H1 (cell line): ENCODE measurements at regions of chr11 and their contacts with region 1.

Region 1: GRCh38 chr11:61187505-61188130 is 15.7 kb upstream of the PGA3 start:
- DNase-seq: peak; percentile 58 to 90
- H3K4me3 ChIP-seq: no peak overlapping the region
- H3K27ac ChIP-seq: no peak overlapping the region
- H3K4me1 ChIP-seq: no peaks in the 10 kb centered on the region
- H3K27me3 ChIP-seq: no peaks in the 10 kb centered on the region
- CTCF ChIP-seq: peak; percentile 80 to 93 (median 89)
- EP300 ChIP-seq: no peak
- POLR2A ChIP-seq: no peak
- RAD21 ChIP-seq: peak; percentile 96 to 97

Region 2: DNA sequence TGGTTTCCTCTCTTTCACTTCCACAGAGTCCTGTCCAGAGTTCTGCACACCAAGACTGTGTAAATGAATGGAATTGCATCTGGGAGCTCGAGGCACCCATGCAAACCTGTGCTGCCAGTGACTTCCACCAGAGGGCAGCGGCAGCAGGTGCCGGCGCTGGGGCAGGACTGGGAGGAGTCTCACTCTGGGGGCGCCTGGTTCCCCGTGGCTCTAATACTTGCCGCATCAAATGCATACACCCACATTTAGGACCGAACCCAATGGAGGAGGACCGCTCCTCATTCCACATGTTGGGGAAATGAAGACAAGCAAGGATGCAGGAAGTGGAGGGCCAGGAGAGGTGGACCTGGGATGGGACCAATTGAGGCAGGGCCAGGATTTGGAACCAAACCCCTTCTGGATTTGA is 217.2 kb before region 1 on chr11:
- CTCF ChIA-PET with region 1: interaction called, 19 read pairs
- POLR2A ChIA-PET with region 1: interaction called, 4 read pairs
- DNase-seq: peak in 1 of 2 experiments; percentile 86
- H3K4me3 ChIP-seq: no peak overlapping the region
- H3K27ac ChIP-seq: no peak overlapping the region
- H3K4me1 ChIP-seq: no peaks in the 10 kb centered on the region
- H3K27me3 ChIP-seq: no peaks in the 10 kb centered on the region; a peak in 2 of 7 replicates
- CTCF ChIP-seq: peak; percentile 88 to 96 (median 89)
- EP300 ChIP-seq: no peak
- POLR2A ChIP-seq: no peak
- RAD21 ChIP-seq: peak; percentile 77 to 84

Region 3: DNA sequence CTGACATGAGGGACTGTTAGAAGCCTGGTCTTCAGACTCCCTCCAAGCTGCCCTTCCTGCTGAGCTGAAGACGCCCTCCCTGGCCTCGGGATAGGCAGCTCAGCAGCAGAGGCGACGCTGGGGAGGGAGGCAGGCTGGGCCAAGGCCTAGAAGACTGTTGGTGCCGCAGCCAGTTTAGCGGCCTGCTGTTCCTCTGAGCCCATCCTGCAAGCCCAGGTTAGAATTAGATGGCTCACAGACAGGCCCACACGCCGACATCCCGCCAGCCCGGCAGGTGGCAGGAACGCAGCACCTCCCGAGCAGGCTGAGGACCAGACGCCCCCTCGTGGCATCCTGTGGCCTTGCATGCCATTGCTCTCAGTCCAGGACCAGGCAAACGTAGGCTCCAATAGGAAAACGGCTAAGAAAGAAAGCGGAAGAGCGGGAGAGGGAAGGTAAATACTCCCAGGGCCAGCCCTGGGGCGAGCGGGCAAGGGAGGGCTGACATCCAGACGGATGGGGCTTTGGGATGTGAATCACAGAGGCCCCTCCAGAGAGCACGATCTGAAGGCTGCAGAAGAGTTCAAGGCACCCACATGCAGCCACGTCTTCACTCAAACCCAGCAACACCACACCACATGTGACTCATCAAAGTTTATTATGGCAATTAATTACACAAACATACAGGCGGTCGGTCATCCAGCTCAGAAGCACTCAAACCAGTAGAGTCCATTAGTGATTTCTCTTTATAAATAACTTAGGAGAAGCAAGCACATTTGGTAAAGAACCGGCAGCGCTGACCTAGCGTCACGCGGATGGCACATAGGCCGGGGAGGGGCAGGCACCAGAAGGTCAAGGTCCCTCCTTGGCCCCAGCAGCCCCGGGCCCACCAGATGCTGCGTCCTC is 57.7 kb before region 1 on chr11:
- CTCF ChIA-PET with region 1: interaction called, 38 read pairs
- POLR2A ChIA-PET with region 1: no interaction called
- DNase-seq: peak; percentile 91 to 98
- H3K4me3 ChIP-seq: no peak overlapping the region
- H3K27ac ChIP-seq: no peak overlapping the region
- H3K4me1 ChIP-seq: peaks cover 0 to 8% (median 5%) of the 10 kb centered on the region in 4 experiments; a peak in 4 of 7 replicates
- H3K27me3 ChIP-seq: no peaks in the 10 kb centered on the region
- CTCF ChIP-seq: peak; percentile 100
- EP300 ChIP-seq: no peak
- POLR2A ChIP-seq: no peak
- RAD21 ChIP-seq: peak; percentile 98

Region 4: DNA sequence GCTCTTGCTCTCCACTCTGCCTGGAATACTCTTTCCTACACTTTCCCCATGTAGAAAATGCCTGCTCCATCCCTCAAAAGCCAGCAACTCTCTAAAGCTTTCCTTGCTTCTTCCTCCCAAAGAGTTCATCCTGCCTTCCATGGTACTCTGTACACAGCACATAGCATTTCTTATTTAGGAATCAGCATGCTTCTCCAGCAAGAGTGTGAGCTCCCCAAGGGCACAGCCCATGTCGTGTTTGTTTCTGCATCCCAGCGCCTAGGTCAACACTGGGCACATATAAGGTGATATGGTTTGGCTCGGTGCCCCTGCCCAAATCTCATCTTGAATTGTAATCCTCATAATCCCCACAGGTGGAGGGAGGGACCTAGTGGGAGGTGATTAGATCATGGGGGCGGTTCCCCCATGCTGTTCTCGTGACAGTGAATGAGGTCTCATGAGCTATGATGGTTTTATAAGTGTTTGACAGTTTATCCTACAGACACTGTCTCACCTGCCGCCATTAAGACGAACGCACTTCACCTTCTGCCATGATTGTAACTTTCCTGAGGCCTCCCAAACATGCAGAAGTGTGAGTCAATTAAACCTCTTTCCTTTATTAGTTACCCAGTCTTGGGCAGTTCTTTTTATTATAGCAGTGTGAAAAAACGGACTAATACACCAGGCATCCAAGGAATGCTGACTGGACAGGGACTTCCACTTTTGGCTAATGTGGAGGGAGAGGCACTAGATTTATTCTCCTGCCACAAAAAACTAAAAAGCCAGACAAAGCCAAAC is 34.6 kb before region 1 on chr11:
- CTCF ChIA-PET with region 1: interaction called, 13 read pairs
- POLR2A ChIA-PET with region 1: no interaction called
- DNase-seq: no peak
- H3K4me3 ChIP-seq: no peak overlapping the region
- H3K27ac ChIP-seq: no peak overlapping the region
- H3K4me1 ChIP-seq: peaks cover 2 to 21% (median 9%) of the 10 kb centered on the region in 4 experiments; a peak in 6 of 7 replicates
- H3K27me3 ChIP-seq: no peaks in the 10 kb centered on the region
- CTCF ChIP-seq: no peak
- EP300 ChIP-seq: no peak
- POLR2A ChIP-seq: no peak
- RAD21 ChIP-seq: no peak

Region 5: GRCh38 chr11:61172356-61172755 is 15.3 kb before region 1 on chr11:
- CTCF ChIA-PET with region 1: interaction called, 11 read pairs
- POLR2A ChIA-PET with region 1: no interaction called
- DNase-seq: no peak
- H3K4me3 ChIP-seq: no peak overlapping the region
- H3K27ac ChIP-seq: no peak overlapping the region
- H3K4me1 ChIP-seq: no peaks in the 10 kb centered on the region
- H3K27me3 ChIP-seq: 0 out of 7 replicates have a peak, but pooled peaks cover 0 to 3% (median 0%) of the 10 kb centered on the region in 4 experiments
- CTCF ChIP-seq: no peak
- EP300 ChIP-seq: no peak
- POLR2A ChIP-seq: no peak
- RAD21 ChIP-seq: no peak